Right ventricle myocardium inferior (tissue), 1 donor: ENCODE measurements at regions of chr16 and their contacts with region 1.

Region 1: GRCh38 chr16:58733671-58734458 is at the start of gene GOT2:
- DNase-seq: peak; percentile 89
- ATAC-seq: peak; percentile 98
- total RNA-seq, gene GOT2: 524 TPM

Region 2: GRCh38 chr16:58515125-58515870 is 218.6 kb before region 1 on chr16 and contains the start of gene SETD6:
- intact Hi-C with region 1: loop called (anchors 10 kb)
- DNase-seq: peak; percentile 93
- ATAC-seq: peak; percentile 96
- total RNA-seq, gene SETD6: 13.0 TPM

Region 3: GRCh38 chr16:58614212-58614611 is 119.7 kb before region 1 on chr16:
- intact Hi-C with region 1: no loop called
- DNase-seq: no peak
- ATAC-seq: no peak

Region 4: DNA sequence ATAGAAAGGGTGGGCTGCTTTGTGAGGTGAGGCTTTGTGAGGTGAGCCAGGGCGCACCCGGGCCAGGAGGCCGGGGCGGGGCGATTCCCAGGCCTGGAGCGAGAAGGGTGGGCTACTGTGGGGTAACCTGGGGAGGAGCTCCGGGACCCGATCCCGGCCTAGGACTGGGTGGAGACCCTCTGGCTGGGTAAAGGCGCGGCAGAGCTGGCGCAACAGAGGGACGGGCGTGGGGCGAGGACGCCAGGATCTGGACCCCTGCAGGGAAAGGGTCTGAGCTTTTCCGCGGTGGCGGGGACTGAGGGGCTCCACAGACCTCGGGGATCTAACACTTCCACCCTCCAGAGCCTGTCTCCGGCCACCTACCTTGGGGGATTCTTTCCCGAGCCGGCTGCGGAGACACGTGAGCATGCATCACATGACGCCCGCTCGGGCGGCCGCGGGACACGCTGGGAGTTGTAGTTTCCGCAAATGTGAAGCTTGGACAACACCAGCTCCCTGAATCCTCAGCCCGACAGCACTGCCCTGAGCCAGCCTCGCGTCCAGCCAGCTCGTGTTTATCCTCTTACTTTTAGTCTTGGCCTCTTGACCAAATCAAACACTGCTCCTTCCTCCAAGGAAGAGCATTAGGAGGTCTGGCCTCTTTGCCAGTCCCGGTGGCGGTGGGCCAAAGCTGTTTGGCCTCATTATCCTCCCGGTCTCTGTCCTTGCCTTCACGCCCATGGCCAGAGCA is 49.3 kb before region 1 on chr16 and contains the start of gene SLC38A7:
- intact Hi-C with region 1: loop called (anchors 5 kb)
- DNase-seq: peak; percentile 94
- ATAC-seq: peak; percentile 93
- total RNA-seq, gene SLC38A7: 32.7 TPM

Region 5: DNA sequence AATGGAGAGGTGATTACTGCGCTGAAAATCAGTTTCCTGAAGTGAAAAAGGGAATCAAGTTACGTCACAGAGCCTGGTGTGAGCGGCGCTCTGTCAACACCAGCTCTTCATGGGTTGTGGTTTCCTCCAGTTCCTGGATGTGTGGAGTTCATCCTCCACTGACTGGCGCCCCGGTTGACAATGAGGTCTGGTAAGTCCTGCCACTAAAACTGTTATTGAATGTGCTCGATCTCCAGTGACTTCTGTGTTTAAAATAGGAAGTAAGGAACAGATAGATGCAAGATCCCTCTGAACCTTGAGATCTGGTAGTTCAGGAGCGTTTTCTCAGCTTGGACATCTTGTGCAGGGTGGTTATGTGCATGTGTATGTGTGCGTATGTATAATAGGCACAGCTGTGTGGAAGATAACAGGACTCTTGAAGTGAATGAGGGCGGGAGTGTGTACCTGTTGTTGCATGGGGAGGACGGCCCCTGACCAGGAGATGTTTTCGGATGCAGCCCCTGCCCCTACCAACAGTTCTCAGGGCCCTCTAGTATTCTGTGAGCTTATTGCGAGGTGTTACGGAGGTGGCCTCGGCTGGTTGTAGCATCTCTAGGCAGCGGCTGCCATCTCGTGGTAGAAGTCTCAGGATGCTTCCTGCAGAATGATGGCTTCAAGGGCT is 22.3 kb after region 1 on chr16:
- intact Hi-C with region 1: loop called (anchors 2 kb)
- DNase-seq: no peak
- ATAC-seq: peak; percentile 94

Region 6: GRCh38 chr16:59047114-59047513 is 313.2 kb after region 1 on chr16:
- intact Hi-C with region 1: no loop called
- DNase-seq: no peak
- ATAC-seq: no peak